Pancreas (tissue), 10 donors: ENCODE measurements at regions of chr17 and their contacts with region 1.

Region 1: GRCh38 chr17:2421315-2422147 is 20.7 kb upstream of the MNT start:
- DNase-seq: peak in 3 of 6 donors; percentile 57 to 77 (median 74)
- ATAC-seq: peak; percentile 42 to 69 (median 64)
- H3K4me3 ChIP-seq: no peak overlapping the region
- H3K27ac ChIP-seq: no peak overlapping the region
- H3K4me1 ChIP-seq: peaks cover 5 to 12% (median 7%) of the 10 kb centered on the region in 3 donors
- H3K27me3 ChIP-seq: no peaks in the 10 kb centered on the region
- CTCF ChIP-seq: peak in 1 of 4 donors; percentile 13

Region 2: GRCh38 chr17:2369551-2370210 is 51.9 kb before region 1 on chr17:
- intact Hi-C with region 1: loop called in 1 of 3 experiments (anchors 10 kb)
- DNase-seq: no peak
- ATAC-seq: no peak
- H3K4me3 ChIP-seq: no peak overlapping the region
- H3K27ac ChIP-seq: no peak overlapping the region
- H3K4me1 ChIP-seq: no peaks in the 10 kb centered on the region
- H3K27me3 ChIP-seq: no peaks in the 10 kb centered on the region
- CTCF ChIP-seq: no peak